K562 (cell line): ENCODE measurements at regions of chr1 and their contacts with region 1.

Region 1: GRCh38 chr1:197521118-197521739 is 253.2 kb downstream of the CRB1 start:
- DNase-seq: peak; percentile 48 to 56 (median 52)
- ATAC-seq: peak; percentile 65
- H3K4me3 ChIP-seq: no peak overlapping the region
- H3K27ac ChIP-seq: no peak overlapping the region
- H3K4me1 ChIP-seq: no peaks in the 10 kb centered on the region
- H3K27me3 ChIP-seq: no peaks in the 10 kb centered on the region
- CTCF ChIP-seq: peak; percentile 67 to 85 (median 72); a peak in 5 of 6 replicates
- EP300 ChIP-seq: no peak
- POLR2A ChIP-seq: no peak
- RAD21 ChIP-seq: peak; percentile 73 to 85

Region 2: DNA sequence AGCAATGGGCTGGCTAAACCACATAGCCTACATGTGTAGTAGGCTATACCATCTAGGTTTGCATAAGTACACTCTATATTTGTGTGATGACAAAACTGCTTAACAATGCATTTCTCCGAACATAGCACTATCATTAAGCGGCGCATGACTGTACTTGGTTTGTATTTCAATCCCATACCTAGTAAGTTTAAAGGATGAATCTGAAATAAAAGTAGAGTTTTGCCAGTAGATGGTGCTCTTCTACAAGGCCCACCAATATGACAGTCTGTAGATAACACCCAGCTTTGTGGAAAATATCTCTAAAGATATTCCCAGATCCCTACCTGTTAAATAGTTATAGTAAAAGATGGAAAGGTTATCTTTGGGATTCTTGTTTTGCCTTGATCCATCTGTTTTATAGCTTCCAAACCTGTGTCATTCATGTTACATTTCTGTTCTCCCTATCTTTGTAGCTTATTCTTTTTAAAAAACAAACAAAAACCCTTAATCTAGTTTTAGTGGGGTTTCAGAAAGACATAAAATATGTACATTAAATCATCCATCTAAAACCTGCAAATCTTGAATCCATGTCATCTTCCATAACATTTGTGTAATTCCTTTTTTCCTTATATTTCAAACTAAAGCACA is 340.9 kb before region 1 on chr1:
- CTCF ChIA-PET with region 1: no interaction called
- POLR2A ChIA-PET with region 1: no interaction called
- in situ Hi-C with region 1: no loop called
- intact Hi-C with region 1: loop called (anchors 1 kb)
- DNase-seq: peak; percentile 27 to 56 (median 42)
- ATAC-seq: peak; percentile 88
- H3K4me3 ChIP-seq: no peak overlapping the region
- H3K27ac ChIP-seq: no peak overlapping the region
- H3K4me1 ChIP-seq: peaks cover 3 to 4% of the 10 kb centered on the region in 2 experiments; a peak in 2 of 5 replicates
- H3K27me3 ChIP-seq: no peaks in the 10 kb centered on the region
- CTCF ChIP-seq: peak; percentile 48 to 82 (median 63); a peak in 5 of 6 replicates
- EP300 ChIP-seq: no peak
- POLR2A ChIP-seq: no peak
- RAD21 ChIP-seq: peak; percentile 88 to 90

Region 3: DNA sequence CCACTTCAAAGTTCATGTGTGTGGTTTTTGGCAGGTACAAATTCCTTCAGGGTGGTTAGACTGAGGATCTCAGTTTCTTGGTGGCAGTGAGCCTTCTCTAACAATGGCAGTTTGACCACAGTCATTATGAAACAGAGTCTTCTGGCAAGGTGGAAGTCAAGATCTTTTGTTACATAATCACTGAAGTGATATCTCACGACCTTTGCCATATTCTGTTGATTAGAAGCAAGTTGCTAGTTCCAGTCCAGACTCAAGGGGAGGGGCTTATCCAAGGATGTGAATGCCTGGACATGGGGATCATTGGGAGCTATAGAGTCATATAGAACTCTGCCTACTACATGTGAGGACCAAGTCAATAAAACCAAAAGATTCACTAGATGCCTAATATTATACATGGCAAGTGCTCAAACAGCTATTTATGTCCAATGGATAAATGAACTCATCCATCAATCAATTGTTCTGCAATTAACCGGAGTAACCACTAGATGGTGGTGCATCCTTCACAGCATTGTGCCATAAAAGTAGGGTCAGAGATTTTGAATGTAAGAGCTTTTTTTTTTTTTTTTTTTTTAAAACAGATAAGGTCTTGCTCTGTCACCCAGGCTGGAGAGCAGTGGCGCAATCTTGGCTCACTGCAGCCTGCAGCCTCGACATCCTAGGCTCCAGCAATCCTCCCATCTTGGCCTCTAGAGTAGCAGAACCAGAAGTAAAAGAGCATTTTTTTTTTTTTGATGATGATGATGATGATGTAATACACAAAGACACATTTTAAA is 121.3 kb before region 1 on chr1:
- CTCF ChIA-PET with region 1: interaction called, 4 read pairs
- POLR2A ChIA-PET with region 1: no interaction called
- in situ Hi-C with region 1: no loop called
- intact Hi-C with region 1: loop called (anchors 2 kb)
- DNase-seq: peak; percentile 29 to 66 (median 49)
- ATAC-seq: peak; percentile 96
- H3K4me3 ChIP-seq: no peak overlapping the region
- H3K27ac ChIP-seq: no peak overlapping the region
- H3K4me1 ChIP-seq: no peaks in the 10 kb centered on the region
- H3K27me3 ChIP-seq: peaks cover 3 to 11% of the 10 kb centered on the region in 2 experiments; a peak in 2 of 5 replicates
- CTCF ChIP-seq: peak; percentile 60 to 76 (median 68)
- EP300 ChIP-seq: no peak
- POLR2A ChIP-seq: no peak
- RAD21 ChIP-seq: peak; percentile 74 to 81

Region 4: DNA sequence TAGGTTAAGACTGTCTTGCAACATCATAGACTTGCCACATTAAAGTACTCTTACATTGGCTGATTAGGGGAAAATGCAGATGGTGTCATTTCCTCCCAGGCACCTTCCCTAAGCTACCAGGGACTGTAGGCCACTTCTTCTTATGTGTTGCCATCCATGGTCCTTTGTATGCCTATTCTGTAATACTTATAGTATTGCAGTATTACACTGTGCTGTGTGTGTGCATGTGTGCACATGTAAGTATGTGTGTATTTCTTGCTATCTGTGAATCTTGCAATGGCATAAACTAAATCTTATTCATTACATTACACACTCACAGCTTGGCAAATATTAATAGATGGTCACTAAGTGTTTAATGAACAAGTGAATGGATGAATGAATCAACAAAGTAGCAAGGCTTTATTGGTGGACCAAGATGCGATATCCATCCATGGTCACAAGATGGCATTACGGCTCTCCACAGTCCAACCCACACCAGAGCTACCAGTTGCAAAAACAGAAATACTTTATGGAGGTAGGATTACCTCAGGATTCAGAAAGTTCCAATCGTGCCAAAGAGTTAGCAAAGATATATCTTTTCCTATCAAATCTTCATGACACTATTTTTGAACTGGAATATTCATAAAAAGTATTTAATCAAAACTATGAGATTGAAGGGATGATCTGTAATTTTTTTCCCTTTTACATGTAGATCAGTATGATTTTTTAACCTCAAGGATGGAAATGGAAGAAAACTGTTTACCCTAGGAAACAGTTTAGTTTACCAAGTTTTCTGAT is 93.9 kb after region 1 on chr1:
- CTCF ChIA-PET with region 1: no interaction called
- POLR2A ChIA-PET with region 1: no interaction called
- in situ Hi-C with region 1: no loop called
- intact Hi-C with region 1: loop called (anchors 5 kb)
- DNase-seq: peak in 2 of 4 experiments; percentile 18 to 62
- ATAC-seq: peak; percentile 95
- H3K4me3 ChIP-seq: no peak overlapping the region
- H3K27ac ChIP-seq: no peak overlapping the region
- H3K4me1 ChIP-seq: no peaks in the 10 kb centered on the region
- H3K27me3 ChIP-seq: no peaks in the 10 kb centered on the region
- CTCF ChIP-seq: peak; percentile 63 to 74 (median 67)
- EP300 ChIP-seq: no peak
- POLR2A ChIP-seq: no peak
- RAD21 ChIP-seq: peak; percentile 85 to 88

Region 5: GRCh38 chr1:198064201-198064600 is 543.0 kb after region 1 on chr1:
- CTCF ChIA-PET with region 1: no interaction called
- POLR2A ChIA-PET with region 1: no interaction called
- in situ Hi-C with region 1: no loop called
- intact Hi-C with region 1: loop called (anchors 10 kb)
- DNase-seq: no peak
- ATAC-seq: no peak
- H3K4me3 ChIP-seq: no peak overlapping the region
- H3K27ac ChIP-seq: no peak overlapping the region
- H3K4me1 ChIP-seq: no peaks in the 10 kb centered on the region
- H3K27me3 ChIP-seq: no peaks in the 10 kb centered on the region
- CTCF ChIP-seq: no peak
- EP300 ChIP-seq: no peak
- POLR2A ChIP-seq: no peak
- RAD21 ChIP-seq: no peak

Region 6: DNA sequence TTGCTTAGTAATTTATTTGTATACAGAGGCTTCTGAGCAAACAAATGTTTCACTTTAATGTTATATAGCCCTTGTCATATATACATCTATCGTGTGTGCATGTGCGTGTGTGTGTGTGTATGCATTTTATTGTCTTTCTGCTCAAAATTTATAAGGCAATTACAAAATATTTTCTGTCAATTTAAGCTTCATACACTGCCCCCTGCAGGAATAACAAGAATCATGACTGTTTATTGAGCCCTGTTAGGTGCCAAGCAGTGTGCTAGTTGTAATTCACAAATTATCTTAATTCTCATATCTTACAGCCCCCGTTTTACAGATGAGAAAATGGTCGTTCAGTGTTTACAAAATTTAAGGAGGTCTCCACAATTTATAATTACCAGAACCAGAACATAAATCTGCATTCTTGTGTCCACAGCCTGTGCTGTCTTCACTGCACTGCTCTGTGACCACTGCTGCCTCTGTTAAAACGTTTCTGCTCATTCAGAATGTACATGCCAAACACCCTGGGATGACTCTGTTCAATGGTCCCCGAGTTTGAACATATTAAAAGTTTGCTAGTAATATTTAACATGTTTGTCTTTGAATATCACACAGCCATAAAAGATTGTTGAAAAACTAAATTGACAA is 837.9 kb after region 1 on chr1:
- CTCF ChIA-PET with region 1: no interaction called
- POLR2A ChIA-PET with region 1: no interaction called
- in situ Hi-C with region 1: no loop called
- intact Hi-C with region 1: loop called (anchors 5 kb)
- DNase-seq: peak in 1 of 4 experiments; percentile 36
- ATAC-seq: peak; percentile 75
- H3K4me3 ChIP-seq: no peak overlapping the region
- H3K27ac ChIP-seq: no peak overlapping the region
- H3K4me1 ChIP-seq: no peaks in the 10 kb centered on the region
- H3K27me3 ChIP-seq: no peaks in the 10 kb centered on the region
- CTCF ChIP-seq: peak; percentile 43 to 56 (median 47); a peak in 5 of 6 replicates
- EP300 ChIP-seq: no peak
- POLR2A ChIP-seq: no peak
- RAD21 ChIP-seq: peak; percentile 62 to 74